ENCODE measurements at regions of chr3 and their contacts with region 1.

Region 1: GRCh38 chr3:156674046-156674910 is at the start of gene TIPARP:
- DNase-seq: peak; percentile 96 to 99 (median 98)
- H3K4me3 ChIP-seq: peak within 1 kb of the TSS; percentile 66 to 98 (median 89)
- H3K27ac ChIP-seq: peak within 1 kb of the TSS; percentile 65 to 97 (median 93)
- H3K27me3 ChIP-seq: no peaks in the 10 kb centered on the region
- CTCF ChIP-seq: peak; percentile 44 to 98 (median 83)
- total RNA-seq, gene TIPARP: 13.7 to 81.5 (median 24.6) TPM

Region 2: GRCh38 chr3:155895379-155895900 is 778.8 kb before region 1 on chr3:
- intact Hi-C with region 1: no loop called
- DNase-seq: no peak
- H3K4me3 ChIP-seq: no peak overlapping the region
- H3K27ac ChIP-seq: no peak overlapping the region
- H3K27me3 ChIP-seq: no peaks in the 10 kb centered on the region
- CTCF ChIP-seq: no peak

Region 3: DNA sequence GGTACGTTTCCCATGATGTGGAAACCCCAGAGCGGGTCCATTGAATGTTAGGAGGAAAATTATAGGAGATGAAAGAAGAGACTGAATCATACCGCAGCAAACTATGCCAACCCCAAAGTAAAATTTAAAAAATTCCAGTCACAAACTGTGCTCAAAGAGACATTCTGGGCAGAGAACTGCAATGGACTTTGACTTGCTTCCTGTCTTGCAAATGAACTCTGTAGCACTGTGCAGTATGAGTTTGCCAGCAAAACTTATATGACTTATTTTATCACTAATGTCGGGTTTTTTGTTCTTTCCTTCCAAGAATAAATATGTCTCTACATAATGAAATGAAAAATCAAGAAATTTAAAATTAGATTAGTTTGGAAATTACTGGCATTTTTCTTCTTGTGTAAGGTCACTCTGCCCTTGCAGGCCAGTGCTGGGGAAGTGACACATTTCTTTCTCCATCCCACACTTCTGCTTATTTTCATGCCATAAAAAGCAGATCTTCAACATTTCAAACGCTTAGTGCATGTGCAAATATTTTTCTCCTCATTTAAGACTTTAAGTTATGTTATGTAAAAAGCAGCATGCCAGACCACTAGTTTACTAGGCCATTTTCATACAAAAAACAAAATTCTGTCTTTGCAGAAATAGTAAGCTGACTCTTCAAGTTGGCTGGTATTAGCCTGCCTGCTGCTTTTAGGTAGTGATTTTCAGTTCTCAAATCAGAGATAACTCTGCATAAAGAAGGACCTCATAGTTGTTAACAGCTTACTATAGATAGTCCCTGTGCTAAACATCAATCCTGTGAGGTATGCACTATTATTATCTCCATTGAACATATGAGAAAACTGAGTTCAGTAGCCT is 87.1 kb before region 1 on chr3:
- intact Hi-C with region 1: no loop called
- DNase-seq: no peak
- H3K4me3 ChIP-seq: no peak overlapping the region
- H3K27ac ChIP-seq: peak overlapping the region in 31 of 59 donors; percentile 2 to 78 (median 38)
- H3K27me3 ChIP-seq: no peaks in the 10 kb centered on the region
- CTCF ChIP-seq: no peak

Region 4: GRCh38 chr3:156816800-156817645 is 142.7 kb after region 1 on chr3:
- intact Hi-C with region 1: loop called in 1 of 2 experiments (anchors 2 kb)
- DNase-seq: peak; percentile 33 to 79 (median 56)
- H3K4me3 ChIP-seq: peak overlapping the region; percentile 37 to 82 (median 68)
- H3K27ac ChIP-seq: peak overlapping the region in 54 of 59 donors; percentile 2 to 88 (median 66)
- H3K27me3 ChIP-seq: peaks cover 0 to 6% (median 0%) of the 10 kb centered on the region in 45 donors
- CTCF ChIP-seq: peak in 13 of 56 donors; percentile 3 to 30 (median 18)

Region 5: GRCh38 chr3:156826144-156826895 is 152.0 kb after region 1 on chr3 and contains the start of gene LEKR1:
- intact Hi-C with region 1: loop called in 1 of 2 experiments (anchors 2 kb)
- DNase-seq: peak; percentile 55 to 88 (median 80)
- H3K4me3 ChIP-seq: peak within 1 kb of the TSS; percentile 55 to 93 (median 78)
- H3K27ac ChIP-seq: peak within 1 kb of the TSS; percentile 30 to 94 (median 83)
- H3K27me3 ChIP-seq: no peaks in the 10 kb centered on the region
- CTCF ChIP-seq: peak in 19 of 56 donors; percentile 6 to 34 (median 16)
- total RNA-seq, gene LEKR1: 0.25 to 7.8 (median 1.3) TPM in 114 of 120 experiments, not detected in the others

Region 6: GRCh38 chr3:156847752-156848448 is 173.6 kb after region 1 on chr3:
- intact Hi-C with region 1: no loop called
- DNase-seq: no peak
- H3K4me3 ChIP-seq: no peak overlapping the region
- H3K27ac ChIP-seq: no peak overlapping the region
- H3K27me3 ChIP-seq: no peaks in the 10 kb centered on the region
- CTCF ChIP-seq: no peak

Region 7: GRCh38 chr3:157081681-157082210 is 407.5 kb after region 1 on chr3:
- intact Hi-C with region 1: loop called (anchors 1 kb)
- DNase-seq: peak; percentile 90 to 93 (median 92)
- H3K4me3 ChIP-seq: peak overlapping the region in 12 of 59 donors; percentile 7 to 31 (median 16)
- H3K27ac ChIP-seq: peak overlapping the region; percentile 9 to 96 (median 86)
- H3K27me3 ChIP-seq: no peaks in the 10 kb centered on the region
- CTCF ChIP-seq: peak; percentile 89 to 100 (median 98)

Region 8: GRCh38 chr3:157136647-157137387 is 462.5 kb after region 1 on chr3:
- intact Hi-C with region 1: loop called (anchors 1 to 2 kb)
- DNase-seq: no peak
- H3K4me3 ChIP-seq: peak overlapping the region in 17 of 59 donors; percentile 17 to 63 (median 49)
- H3K27ac ChIP-seq: peak overlapping the region; percentile 60 to 100 (median 96)
- H3K27me3 ChIP-seq: no peaks in the 10 kb centered on the region
- CTCF ChIP-seq: no peak